HCT116 (cell line): ENCODE measurements at regions of chr2 and their contacts with region 1.

Region 1: DNA sequence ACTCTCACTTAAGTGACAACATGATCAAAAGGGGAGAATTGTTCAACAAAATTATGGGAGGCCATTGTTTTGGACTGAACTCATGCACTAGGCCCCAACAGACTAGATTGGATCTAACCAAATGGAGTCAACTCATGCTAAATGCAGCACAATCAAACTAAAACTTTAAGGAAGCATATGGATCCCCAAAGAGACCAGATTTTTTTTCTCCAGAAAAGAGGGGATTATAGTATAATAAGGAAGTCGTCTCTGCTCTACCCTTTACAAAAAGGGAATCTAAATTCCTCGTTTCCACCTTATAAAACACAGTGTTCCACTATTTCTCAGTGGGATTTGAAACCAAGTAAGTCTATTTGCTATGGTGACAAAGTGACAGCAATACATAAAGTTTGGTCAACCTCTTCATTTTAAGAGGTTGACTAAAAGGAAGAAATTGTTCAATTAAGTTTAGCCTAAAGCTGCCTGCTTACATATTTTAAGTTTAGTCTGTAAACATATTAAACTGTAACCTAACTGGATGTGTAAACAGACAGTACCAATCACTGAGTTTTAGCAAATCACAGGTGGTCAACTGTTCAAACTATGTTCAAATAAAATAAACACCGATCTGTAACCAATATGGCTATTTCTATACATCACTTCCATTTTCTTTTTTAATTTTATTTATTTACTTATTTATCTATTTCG is 40.9 kb upstream of the MAT2A start:
- DNase-seq: no peak
- ATAC-seq: no peak
- H3K4me3 ChIP-seq: no peak overlapping the region
- H3K27ac ChIP-seq: peak overlapping the region; percentile 92
- H3K4me1 ChIP-seq: peaks cover 30 to 62% of the 10 kb centered on the region in 2 experiments
- H3K27me3 ChIP-seq: no peaks in the 10 kb centered on the region
- CTCF ChIP-seq: no peak
- POLR2A ChIP-seq: no peak
- RAD21 ChIP-seq: no peak

Region 2: GRCh38 chr2:85420536-85421259 is 77.4 kb before region 1 on chr2:
- CTCF ChIA-PET with region 1: no interaction called
- POLR2A ChIA-PET with region 1: no interaction called
- RAD21 ChIA-PET with region 1: interaction called in 1 of 2 experiments, 3 read pairs
- intact Hi-C with region 1: loop called (anchors 2 kb)
- DNase-seq: no peak
- ATAC-seq: peak; percentile 75
- H3K4me3 ChIP-seq: no peak overlapping the region
- H3K27ac ChIP-seq: peak overlapping the region; percentile 88
- H3K4me1 ChIP-seq: peaks cover 35 to 43% of the 10 kb centered on the region in 2 experiments; a peak in 3 of 4 replicates
- H3K27me3 ChIP-seq: no peaks in the 10 kb centered on the region
- CTCF ChIP-seq: peak in 2 of 3 experiments; percentile 92 to 100; a peak in 4 of 6 replicates
- POLR2A ChIP-seq: no peak
- RAD21 ChIP-seq: no peak

Region 3: GRCh38 chr2:85457877-85458316 is 40.2 kb before region 1 on chr2:
- CTCF ChIA-PET with region 1: no interaction called
- POLR2A ChIA-PET with region 1: interaction called, 8 read pairs
- RAD21 ChIA-PET with region 1: interaction called in 1 of 2 experiments, 4 read pairs
- intact Hi-C with region 1: loop called (anchors 2 kb)
- DNase-seq: peak; percentile 95
- ATAC-seq: peak; percentile 81
- H3K4me3 ChIP-seq: peak overlapping the region in 1 of 2 experiments; percentile 20; a peak in 1 of 4 replicates
- H3K27ac ChIP-seq: peak overlapping the region; percentile 85
- H3K4me1 ChIP-seq: peaks cover 53 to 69% of the 10 kb centered on the region in 2 experiments
- H3K27me3 ChIP-seq: no peaks in the 10 kb centered on the region
- CTCF ChIP-seq: no peak
- POLR2A ChIP-seq: no peak
- RAD21 ChIP-seq: no peak; the same call in 1 of the 2 replicates

Region 4: GRCh38 chr2:85628658-85629057 is 130.6 kb after region 1 on chr2:
- CTCF ChIA-PET with region 1: no interaction called
- POLR2A ChIA-PET with region 1: no interaction called
- RAD21 ChIA-PET with region 1: no interaction called
- intact Hi-C with region 1: no loop called
- DNase-seq: no peak
- ATAC-seq: no peak
- H3K4me3 ChIP-seq: no peak overlapping the region
- H3K27ac ChIP-seq: no peak overlapping the region
- H3K4me1 ChIP-seq: no peaks in the 10 kb centered on the region
- H3K27me3 ChIP-seq: no peaks in the 10 kb centered on the region
- CTCF ChIP-seq: no peak
- POLR2A ChIP-seq: no peak
- RAD21 ChIP-seq: no peak